GM13977 (cell line): ENCODE measurements at regions of chr6 and their contacts with region 1.

Region 1: DNA sequence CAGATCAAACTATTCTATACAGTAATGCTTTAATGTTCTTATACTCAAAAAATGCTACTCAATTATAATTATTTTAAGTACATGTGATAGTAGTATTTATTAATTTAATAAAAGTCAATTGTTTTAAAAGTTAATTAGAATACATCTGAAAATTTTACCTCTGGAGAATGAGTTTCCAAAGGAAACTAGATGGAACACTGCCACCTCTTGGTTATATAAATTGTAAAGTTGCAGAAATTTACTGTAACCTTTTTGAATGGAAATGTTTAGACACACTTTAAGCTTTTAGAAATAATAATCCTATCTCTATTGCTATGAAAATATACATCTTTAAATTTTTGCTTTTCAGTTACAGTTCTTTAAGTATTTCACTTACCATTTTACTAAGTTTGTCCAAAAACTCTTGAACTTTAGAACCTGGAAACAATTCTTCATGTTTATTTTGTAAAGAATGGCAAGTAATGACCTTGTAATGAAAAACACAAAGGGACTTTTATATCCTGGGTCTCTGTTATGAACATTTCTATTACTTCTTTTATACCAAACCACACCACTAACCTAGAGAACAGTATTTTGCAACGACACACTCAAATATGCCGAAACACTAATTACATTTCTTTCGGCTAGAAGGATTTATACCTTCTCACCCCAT is 10.9 kb upstream of the BMP5 start:
- DNase-seq: no peak
- CTCF ChIP-seq: peak; percentile 30

Region 2: DNA sequence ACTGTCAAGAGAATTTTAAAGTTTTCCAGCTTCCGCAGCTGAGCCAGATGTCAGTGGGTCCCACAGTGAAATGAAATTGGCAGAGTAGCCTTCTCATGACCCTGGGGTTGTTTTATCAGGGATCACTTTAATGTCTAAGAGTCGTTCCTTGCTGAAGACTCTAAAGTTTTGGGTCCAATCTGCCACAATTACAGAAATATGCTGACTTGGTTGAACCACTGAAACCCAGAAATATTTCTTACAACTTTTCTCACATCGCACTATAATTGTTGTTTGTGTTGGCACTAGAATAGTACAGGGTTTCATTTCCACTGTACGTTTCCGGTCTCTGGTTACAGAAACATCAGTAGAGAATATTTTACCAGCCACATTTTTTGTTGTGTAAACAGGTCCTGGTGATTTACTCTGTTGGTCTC is 416.4 kb before region 1 on chr6:
- in situ Hi-C with region 1: loop called (anchors 25 kb)
- DNase-seq: no peak
- CTCF ChIP-seq: no peak

Region 3: GRCh38 chr6:56659721-56660380 is 773.5 kb after region 1 on chr6:
- in situ Hi-C with region 1: no loop called
- DNase-seq: peak; percentile 32
- CTCF ChIP-seq: no peak